ENCODE measurements at regions of chr1 and their contacts with region 1.

Region 1: DNA sequence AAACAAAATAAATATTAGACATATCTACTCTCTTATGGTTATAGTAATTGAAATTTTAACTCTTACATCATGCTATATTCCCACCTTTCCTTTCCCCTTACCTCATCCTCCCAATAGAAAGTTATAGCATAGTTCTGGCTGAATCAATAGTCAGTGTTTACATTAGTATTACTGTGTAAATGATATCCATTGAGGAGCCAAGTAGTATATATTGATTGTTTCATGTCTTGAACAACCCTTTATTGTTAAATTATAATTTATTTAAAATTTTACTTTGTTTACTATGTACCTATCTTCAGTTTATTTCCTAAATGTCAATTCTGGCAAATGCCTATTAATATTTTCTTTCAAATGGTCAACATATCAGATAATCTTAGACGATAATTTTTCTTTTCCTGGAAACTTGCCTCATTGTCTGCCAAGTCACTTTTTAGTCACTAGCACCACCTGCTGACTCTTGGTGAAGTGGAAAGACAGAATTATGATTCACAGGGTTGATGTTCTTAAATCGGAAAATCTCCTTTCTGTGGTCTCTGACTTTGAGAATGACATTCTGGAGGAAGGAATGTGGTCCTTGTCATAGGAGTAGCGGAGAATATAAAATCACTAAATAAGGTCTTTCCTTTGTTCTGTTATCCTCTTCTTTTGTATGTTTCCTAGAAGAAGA is 8.7 kb downstream of the HJV start:
- DNase-seq: no peak
- ATAC-seq: peak; percentile 62
- H3K4me3 Mint-ChIP-seq: no peak overlapping the region
- H3K27ac Mint-ChIP-seq: no peak overlapping the region
- H3K4me1 Mint-ChIP-seq: peaks cover 4% of the 10 kb centered on the region
- H3K27me3 Mint-ChIP-seq: peaks cover 6% of the 10 kb centered on the region
- CTCF ChIP-seq: peak; percentile 79

Region 2: DNA sequence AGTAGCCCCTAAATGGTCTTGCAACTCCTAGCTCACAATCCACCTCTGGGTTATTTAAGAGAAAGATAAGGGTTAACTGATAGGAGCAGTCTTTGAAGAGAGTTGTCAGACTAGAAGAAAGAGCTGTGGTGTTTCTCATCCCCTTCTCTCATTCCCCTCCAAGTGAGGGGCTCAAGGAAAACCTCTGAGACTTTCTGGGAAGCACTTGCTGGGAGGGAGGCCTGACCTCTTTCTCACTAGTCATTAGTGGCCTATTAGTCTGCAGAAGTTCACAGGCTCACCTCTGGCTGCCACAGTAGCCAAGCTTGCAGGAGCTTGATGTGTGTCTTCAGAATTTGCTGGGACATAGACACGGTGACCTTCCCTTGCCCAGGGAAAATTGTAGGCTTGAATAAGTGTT is 411.3 kb before region 1 on chr1:
- CTCF ChIA-PET with region 1: no interaction called
- POLR2A ChIA-PET with region 1: no interaction called
- intact Hi-C with region 1: loop called (anchors 10 kb)
- DNase-seq: no peak
- ATAC-seq: no peak
- H3K4me3 Mint-ChIP-seq: no peak overlapping the region
- H3K27ac Mint-ChIP-seq: no peak overlapping the region
- H3K4me1 Mint-ChIP-seq: no peaks in the 10 kb centered on the region
- H3K27me3 Mint-ChIP-seq: peaks cover 9% of the 10 kb centered on the region
- CTCF ChIP-seq: no peak

Region 3: GRCh38 chr1:145720877-145721671 is 291.8 kb before region 1 on chr1:
- CTCF ChIA-PET with region 1: no interaction called
- POLR2A ChIA-PET with region 1: no interaction called
- intact Hi-C with region 1: loop called (anchors 1 kb)
- DNase-seq: peak; percentile 71
- ATAC-seq: peak; percentile 88
- H3K4me3 Mint-ChIP-seq: peak overlapping the region; percentile 68
- H3K27ac Mint-ChIP-seq: no peak overlapping the region
- H3K4me1 Mint-ChIP-seq: peaks cover 12% of the 10 kb centered on the region
- H3K27me3 Mint-ChIP-seq: peaks cover 18% of the 10 kb centered on the region
- CTCF ChIP-seq: peak; percentile 72

Region 4: GRCh38 chr1:145891587-145892485 is 121.0 kb before region 1 on chr1:
- CTCF ChIA-PET with region 1: interaction called, 12 read pairs
- POLR2A ChIA-PET with region 1: no interaction called
- intact Hi-C with region 1: loop called (anchors 1 kb)
- DNase-seq: peak; percentile 35
- ATAC-seq: peak; percentile 75
- H3K4me3 Mint-ChIP-seq: no peak overlapping the region
- H3K27ac Mint-ChIP-seq: no peak overlapping the region
- H3K4me1 Mint-ChIP-seq: no peaks in the 10 kb centered on the region
- H3K27me3 Mint-ChIP-seq: no peaks in the 10 kb centered on the region
- CTCF ChIP-seq: no peak

Measured in activated B cell treated with CpG ODN at 0.5 μM for 24 hours (primary cell).